Mammary epithelial cell (primary cell): ENCODE measurements at regions of chr16 and their contacts with region 1.

Region 1: GRCh38 chr16:73047518-73048291 is at the start of gene ZFHX3:
- DNase-seq: peak; percentile 70
- H3K4me3 ChIP-seq: peak within 1 kb of the TSS; percentile 56 to 74 (median 57)
- H3K27ac ChIP-seq: peak within 1 kb of the TSS; percentile 34
- H3K4me1 ChIP-seq: peaks cover 22% of the 10 kb centered on the region
- H3K27me3 ChIP-seq: no peaks in the 10 kb centered on the region
- CTCF ChIP-seq: peak in 1 of 2 donors; percentile 9
- total RNA-seq, gene ZFHX3: 6.7 to 11.3 TPM

Region 2: DNA sequence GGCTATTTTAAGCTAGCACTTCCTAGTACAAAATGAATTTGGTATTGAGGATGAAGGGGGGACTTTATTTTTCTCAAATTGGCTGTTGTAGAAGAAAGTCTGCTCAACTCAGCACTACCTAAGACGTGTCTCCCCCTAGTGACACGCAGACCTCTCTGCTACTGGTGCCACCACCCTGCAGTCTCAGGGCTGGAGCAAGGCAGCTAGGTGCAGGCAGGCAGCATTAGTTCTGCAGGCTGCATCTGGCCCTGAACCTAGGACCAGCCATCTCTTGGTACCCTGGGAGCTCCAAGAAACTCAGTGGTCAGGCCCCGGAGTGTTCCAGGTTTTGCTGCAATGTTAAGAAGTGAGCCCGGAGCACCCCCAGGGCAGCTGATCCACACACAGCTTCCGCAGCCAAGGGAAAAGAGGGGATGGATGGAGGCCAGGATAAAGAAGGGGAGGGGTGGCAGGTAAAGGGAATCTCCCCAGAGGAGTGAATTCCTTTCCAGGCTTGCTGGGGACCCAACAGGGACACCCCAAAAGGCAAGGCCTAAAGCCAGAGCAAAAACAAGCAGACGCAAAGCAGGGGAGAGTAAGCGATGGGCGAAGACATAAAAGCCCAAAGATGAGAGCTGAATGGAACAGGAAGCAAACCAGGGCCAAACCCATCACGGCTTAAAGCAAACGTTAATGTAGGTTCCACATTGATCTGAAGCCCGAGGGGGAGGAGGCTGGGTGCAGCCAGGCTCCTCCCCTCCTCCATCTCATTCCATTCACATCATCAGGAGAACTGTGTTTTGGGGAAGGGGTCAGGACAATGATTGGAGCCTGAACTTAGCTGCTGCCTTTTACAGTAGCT is 200.3 kb before region 1 on chr16:
- CTCF ChIA-PET with region 1: no interaction called
- dilution Hi-C with region 1: no loop called
- in situ Hi-C with region 1: no loop called
- intact Hi-C with region 1: loop called (anchors 5 kb)
- DNase-seq: no peak
- H3K4me3 ChIP-seq: no peak overlapping the region
- H3K27ac ChIP-seq: no peak overlapping the region
- H3K4me1 ChIP-seq: peaks cover 13% of the 10 kb centered on the region
- H3K27me3 ChIP-seq: no peaks in the 10 kb centered on the region
- CTCF ChIP-seq: peak; percentile 36 to 53

Region 3: DNA sequence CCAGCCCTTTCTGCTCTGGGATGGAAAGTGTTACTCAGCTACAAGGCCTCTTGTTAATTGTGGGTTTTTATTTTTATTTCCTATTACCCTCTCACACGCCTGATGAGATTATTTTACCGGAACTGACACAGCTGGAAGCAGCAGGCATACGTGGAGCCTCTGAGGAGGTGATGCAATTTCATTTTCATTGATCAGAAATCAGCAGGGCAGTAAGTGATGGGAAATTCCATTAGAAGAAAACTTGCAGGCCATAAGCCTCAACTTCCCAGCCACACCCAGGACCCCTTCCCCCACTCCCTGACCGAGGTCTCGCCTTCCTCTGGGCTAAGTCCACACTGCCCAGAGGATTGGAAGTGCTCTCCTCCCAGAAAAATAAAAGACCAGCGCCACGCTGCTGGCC is 69.5 kb before region 1 on chr16:
- CTCF ChIA-PET with region 1: no interaction called
- dilution Hi-C with region 1: no loop called
- in situ Hi-C with region 1: no loop called
- intact Hi-C with region 1: loop called (anchors 5 kb)
- DNase-seq: no peak
- H3K4me3 ChIP-seq: no peak overlapping the region
- H3K27ac ChIP-seq: no peak overlapping the region
- H3K4me1 ChIP-seq: peaks cover under 1% of the 10 kb centered on the region
- H3K27me3 ChIP-seq: no peaks in the 10 kb centered on the region
- CTCF ChIP-seq: no peak

Region 4: GRCh38 chr16:72989579-72990551 is 57.8 kb before region 1 on chr16:
- CTCF ChIA-PET with region 1: no interaction called
- dilution Hi-C with region 1: no loop called
- in situ Hi-C with region 1: no loop called
- intact Hi-C with region 1: loop called (anchors 1 kb)
- DNase-seq: peak; percentile 94
- H3K4me3 ChIP-seq: peak overlapping the region in 1 of 3 experiments; percentile 7
- H3K27ac ChIP-seq: peak overlapping the region; percentile 78
- H3K4me1 ChIP-seq: peaks cover 46% of the 10 kb centered on the region
- H3K27me3 ChIP-seq: no peaks in the 10 kb centered on the region
- CTCF ChIP-seq: no peak

Region 5: GRCh38 chr16:73010150-73010676 is 37.5 kb before region 1 on chr16:
- CTCF ChIA-PET with region 1: no interaction called
- dilution Hi-C with region 1: loop called (anchors 5 kb)
- in situ Hi-C with region 1: no loop called
- intact Hi-C with region 1: no loop called
- DNase-seq: no peak
- H3K4me3 ChIP-seq: no peak overlapping the region
- H3K27ac ChIP-seq: no peak overlapping the region
- H3K4me1 ChIP-seq: peaks cover 1% of the 10 kb centered on the region
- H3K27me3 ChIP-seq: no peaks in the 10 kb centered on the region
- CTCF ChIP-seq: no peak